Right ventricle myocardium superior (tissue), 1 donor: ENCODE measurements at regions of chr10 and their contacts with region 1.

Region 1: GRCh38 chr10:72058989-72059842 is 29.1 kb downstream of the SPOCK2 start:
- DNase-seq: no peak
- ATAC-seq: no peak

Region 2: GRCh38 chr10:72107325-72108003 is 48.2 kb after region 1 on chr10:
- intact Hi-C with region 1: loop called (anchors 10 kb)
- DNase-seq: no peak
- ATAC-seq: no peak